ENCODE measurements at regions of chr19 and their contacts with region 1.

Region 1: DNA sequence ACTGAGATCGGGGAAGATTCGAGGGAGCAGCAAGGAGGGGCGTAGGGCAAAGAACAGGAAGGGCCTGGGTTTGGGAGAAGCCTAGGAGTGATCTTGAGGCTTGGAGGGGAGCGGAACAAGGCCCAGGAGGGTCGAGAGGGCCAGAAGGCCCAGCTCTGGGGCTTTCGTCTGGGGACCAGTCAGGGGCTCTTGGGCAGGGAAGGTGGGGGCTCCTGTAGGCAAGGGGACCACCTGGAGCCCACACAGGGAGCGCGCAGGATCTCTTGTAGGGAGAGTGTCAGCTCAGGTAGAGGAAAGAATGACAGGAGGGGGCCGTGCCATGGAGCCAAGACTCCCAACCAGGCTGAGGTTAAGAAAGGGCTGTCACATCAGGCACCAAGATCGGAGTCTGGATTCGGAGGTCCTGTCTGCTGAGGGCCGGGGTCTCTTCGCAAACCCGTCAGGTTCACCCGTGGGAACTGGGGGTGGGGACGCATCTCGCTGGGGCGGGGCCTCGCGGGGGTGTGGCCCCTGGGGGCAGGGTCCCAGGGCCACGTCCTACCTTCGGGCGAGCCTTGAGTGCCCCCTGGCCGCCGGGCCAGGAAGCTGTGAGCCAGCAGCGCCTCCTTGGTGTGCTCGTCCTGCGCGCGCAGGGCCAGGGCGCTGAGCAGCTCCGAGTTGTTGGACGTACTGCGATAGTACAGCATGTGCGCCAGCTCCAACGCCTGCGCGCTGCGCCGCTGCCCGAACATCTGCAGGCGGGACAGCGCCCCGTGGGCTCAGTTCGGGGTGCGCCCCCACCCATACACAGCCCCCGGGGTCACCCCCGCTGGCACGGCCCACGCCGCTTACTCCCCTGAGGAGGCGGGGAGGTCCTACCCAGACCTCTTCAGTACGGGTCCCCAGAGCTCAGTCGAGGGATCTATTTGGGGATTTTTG is 8.4 kb downstream of the EMP3 start:
- DNase-seq: peak; percentile 95 to 98 (median 97)
- H3K4me3 ChIP-seq: peak overlapping the region; percentile 54 to 91 (median 84)
- H3K27ac ChIP-seq: peak overlapping the region; percentile 91 to 92
- H3K4me1 ChIP-seq: peaks cover 14 to 52% (median 46%) of the 10 kb centered on the region in 4 experiments
- H3K27me3 ChIP-seq: no peaks in the 10 kb centered on the region

Region 2: DNA sequence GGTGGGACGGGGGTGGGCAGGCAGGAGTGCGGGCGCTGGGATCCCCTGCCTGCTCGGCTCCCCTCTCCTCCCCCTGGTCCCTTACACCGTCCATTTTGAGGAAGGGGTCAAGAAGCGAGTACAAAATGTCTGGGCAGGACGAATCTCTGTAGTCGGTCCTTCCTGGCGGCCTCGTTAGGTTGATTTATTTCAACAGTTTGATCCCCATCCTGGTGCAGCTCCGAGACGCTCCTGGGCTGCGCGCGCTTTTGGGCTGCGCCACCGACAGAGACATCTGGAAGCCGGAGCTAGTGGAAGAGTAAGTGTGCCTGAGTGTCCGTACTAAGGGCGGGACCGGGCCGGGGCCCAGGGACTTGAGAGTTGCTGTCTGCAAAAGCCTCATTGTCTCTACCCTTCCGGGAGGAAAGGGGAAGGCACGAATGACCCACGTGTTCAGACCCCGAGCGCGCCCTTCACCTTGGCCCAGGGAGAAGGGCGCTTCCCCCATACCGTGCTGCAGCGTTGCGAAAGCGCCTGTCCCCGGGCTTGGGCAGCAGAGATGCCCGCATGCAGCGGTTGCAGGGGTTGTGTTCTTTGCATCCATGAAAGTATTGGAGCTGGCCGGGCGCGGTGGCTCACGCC is 62.1 kb before region 1 on chr19:
- CTCF ChIA-PET with region 1: interaction called, 10 read pairs
- POLR2A ChIA-PET with region 1: no interaction called
- DNase-seq: peak; percentile 44 to 71 (median 59)
- H3K4me3 ChIP-seq: peak overlapping the region; percentile 37 to 92 (median 78)
- H3K27ac ChIP-seq: peak overlapping the region in 1 of 2 experiments; percentile 39
- H3K4me1 ChIP-seq: peaks cover 0 to 9% (median 3%) of the 10 kb centered on the region in 4 experiments
- H3K27me3 ChIP-seq: no peaks in the 10 kb centered on the region

Region 3: DNA sequence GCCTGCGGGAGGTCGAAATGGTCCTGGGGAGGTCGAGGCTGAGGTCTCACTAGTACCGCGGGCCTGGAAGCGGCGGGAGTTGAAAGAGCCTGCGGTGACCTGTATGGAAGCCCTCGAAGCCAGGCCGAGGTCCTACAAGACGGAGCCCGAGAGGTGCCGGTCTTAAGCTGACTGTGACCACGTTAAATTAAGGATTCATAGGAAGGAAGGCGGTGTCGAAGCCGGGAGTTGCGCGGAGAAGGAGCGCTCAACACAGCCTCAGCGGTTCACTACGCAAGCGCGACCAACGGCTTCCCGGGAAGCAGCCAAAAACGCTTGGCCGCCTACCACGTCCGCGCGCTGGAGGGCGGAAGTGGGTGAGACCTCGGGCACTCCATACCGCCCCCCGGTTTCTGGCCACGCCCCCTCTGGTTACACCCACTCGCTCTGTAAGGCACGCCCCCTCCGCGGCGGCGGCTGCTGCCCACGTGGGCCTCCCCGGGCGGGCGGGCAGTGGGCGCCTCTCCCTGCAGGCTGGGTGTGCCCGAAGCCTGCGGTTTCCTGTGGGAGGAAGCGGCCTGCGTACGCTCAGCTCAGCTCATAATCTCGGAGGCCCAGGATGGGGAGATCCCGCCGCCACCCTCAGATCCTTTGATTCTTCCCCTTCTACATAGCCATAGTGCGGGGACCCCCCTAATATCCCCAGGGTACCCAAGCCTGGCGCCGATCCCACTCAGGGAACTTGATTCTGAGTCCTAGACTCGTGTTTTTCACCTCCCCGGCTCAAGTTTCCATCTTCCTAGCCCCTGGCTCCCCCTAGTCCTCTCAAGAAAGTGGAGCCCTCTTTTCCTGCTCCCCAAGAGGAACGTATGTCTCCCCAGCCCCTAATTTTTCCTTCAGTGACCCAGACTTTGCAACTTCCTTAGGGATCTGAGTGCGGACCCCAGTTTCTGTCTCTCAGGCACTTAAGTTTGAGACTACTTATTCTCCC is 11.8 kb before region 1 on chr19:
- CTCF ChIA-PET with region 1: interaction called, 286 read pairs
- POLR2A ChIA-PET with region 1: interaction called, 85 read pairs
- DNase-seq: peak; percentile 98 to 99 (median 99)
- H3K4me3 ChIP-seq: peak overlapping the region; percentile 48 to 89 (median 74)
- H3K27ac ChIP-seq: peak overlapping the region; percentile 94 to 98
- H3K4me1 ChIP-seq: peaks cover 9 to 64% (median 57%) of the 10 kb centered on the region in 4 experiments
- H3K27me3 ChIP-seq: no peaks in the 10 kb centered on the region

Region 4: GRCh38 chr19:48348035-48348434 is 14.3 kb after region 1 on chr19:
- CTCF ChIA-PET with region 1: interaction called, 22 read pairs
- POLR2A ChIA-PET with region 1: no interaction called
- DNase-seq: no peak
- H3K4me3 ChIP-seq: no peak overlapping the region
- H3K27ac ChIP-seq: no peak overlapping the region
- H3K4me1 ChIP-seq: no peaks in the 10 kb centered on the region
- H3K27me3 ChIP-seq: no peaks in the 10 kb centered on the region

Region 5: GRCh38 chr19:48419158-48419920 is 85.6 kb after region 1 on chr19:
- CTCF ChIA-PET with region 1: no interaction called
- POLR2A ChIA-PET with region 1: no interaction called
- DNase-seq: peak; percentile 84 to 94 (median 93)
- H3K4me3 ChIP-seq: peak overlapping the region in 4 of 7 experiments; percentile 4 to 57 (median 48)
- H3K27ac ChIP-seq: no peak overlapping the region
- H3K4me1 ChIP-seq: peaks cover 0 to 29% (median 26%) of the 10 kb centered on the region in 4 experiments
- H3K27me3 ChIP-seq: peaks cover 0 to 8% (median 0%) of the 10 kb centered on the region in 5 experiments